HepG2 (cell line): ENCODE measurements at regions of chr20 and their contacts with region 1.

Region 1: DNA sequence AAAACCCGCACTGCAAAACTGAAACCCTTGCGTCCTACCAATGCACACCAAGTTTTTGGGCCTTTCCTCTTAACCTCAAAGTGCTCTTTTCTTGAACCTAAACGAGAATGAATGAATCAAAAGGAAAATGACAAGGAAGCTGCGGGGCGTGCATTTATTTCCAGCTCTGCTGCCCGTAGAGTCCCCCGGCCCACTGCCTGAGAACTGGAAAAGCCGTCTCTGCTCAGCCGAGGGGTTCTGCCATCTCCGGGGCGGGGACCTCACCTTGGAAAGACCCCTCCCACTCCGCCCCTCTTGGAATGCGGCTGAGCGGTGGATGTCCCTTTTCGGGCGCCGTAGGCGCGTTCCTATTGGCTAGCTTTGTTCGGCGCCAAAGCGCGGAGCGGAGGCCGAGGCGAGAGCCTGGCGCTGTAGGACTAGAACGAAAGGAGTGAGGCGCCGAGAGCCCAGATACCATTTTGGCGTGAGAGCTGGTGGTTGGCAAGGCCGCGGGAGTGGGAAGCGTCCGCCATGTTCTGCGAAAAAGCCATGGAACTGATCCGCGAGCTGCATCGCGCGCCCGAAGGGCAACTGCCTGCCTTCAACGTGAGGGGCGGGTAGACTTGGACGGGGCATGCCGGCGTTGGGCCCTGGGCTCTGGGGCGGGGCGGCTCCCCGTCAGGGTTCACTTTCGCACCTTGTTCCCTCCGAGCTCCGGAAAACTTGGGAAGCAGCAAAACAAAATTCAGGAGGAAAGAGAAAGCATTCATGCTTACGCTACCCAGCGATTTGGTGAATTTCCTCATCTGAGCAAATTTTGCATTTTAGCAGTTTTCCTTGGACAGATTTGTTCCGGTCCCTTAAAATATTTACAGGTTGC is at the start of gene GINS1:
- DNase-seq: peak; percentile 95
- ATAC-seq: peak; percentile 93
- H3K4me3 ChIP-seq: peak within 1 kb of the TSS; percentile 78 to 89 (median 88)
- H3K27ac ChIP-seq: peak within 1 kb of the TSS; percentile 86
- H3K4me1 ChIP-seq: peaks cover 24% of the 10 kb centered on the region
- H3K27me3 ChIP-seq: no peaks in the 10 kb centered on the region; a peak in 1 of 5 replicates
- CTCF ChIP-seq: peak; percentile 42; the same call in 1 of the 2 replicates
- EP300 ChIP-seq: peak; percentile 37 to 65
- POLR2A ChIP-seq: peak; percentile 94 to 99
- RAD21 ChIP-seq: peak; percentile 48; the same call in 1 of the 2 replicates
- total RNA-seq, gene GINS1: 59.9 and 74.6 TPM in 2 replicates

Region 2: GRCh38 chr20:23668477-23668951 is 1739.0 kb before region 1 on chr20:
- CTCF ChIA-PET with region 1: no interaction called
- POLR2A ChIA-PET with region 1: no interaction called
- in situ Hi-C with region 1: no loop called
- intact Hi-C with region 1: no loop called
- DNase-seq: peak; percentile 84
- ATAC-seq: peak; percentile 95
- H3K4me3 ChIP-seq: no peak overlapping the region
- H3K27ac ChIP-seq: no peak overlapping the region
- H3K4me1 ChIP-seq: peaks cover 22% of the 10 kb centered on the region
- H3K27me3 ChIP-seq: no peaks in the 10 kb centered on the region
- CTCF ChIP-seq: peak; percentile 99
- EP300 ChIP-seq: no peak
- POLR2A ChIP-seq: no peak
- RAD21 ChIP-seq: peak; percentile 94

Region 3: DNA sequence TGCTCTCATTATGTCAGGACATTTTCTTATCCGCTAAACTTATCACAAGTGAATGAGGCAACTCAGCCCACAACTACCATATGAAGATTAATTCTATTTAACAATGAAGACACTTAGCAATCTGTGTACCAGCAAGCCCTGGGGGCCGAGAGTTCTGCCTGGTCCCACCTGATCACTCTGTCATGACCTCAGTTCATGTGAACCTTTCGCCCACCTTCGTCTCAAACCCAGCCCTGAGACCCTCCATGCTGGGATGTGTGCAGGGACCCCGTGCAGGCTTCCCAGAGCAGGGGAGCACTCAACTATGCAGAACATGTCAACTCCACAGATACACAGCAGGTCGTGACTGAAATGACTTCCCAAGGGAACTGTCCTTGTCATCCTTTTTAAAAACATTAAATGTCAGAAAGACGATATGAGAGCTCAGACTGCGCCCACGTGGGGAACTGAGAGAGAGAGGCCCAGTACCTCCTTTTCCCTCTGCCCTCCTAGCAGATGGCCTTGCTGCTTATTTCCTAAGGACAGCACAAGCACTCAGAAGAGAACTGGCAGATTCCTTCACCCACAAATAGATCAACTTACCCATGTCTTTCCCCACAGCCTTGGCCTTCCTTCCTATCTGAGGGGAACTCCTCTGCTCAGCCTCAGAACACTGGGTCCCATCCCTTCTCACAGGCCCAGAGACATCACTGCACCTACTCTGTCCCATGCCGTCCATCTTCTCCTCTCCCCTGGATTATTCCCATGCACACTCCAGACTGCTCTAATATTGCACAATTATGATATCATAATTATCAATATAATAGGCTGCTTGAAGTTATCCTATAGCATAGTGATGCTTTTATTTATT is 28.4 kb before region 1 on chr20:
- CTCF ChIA-PET with region 1: interaction called, 3 read pairs
- POLR2A ChIA-PET with region 1: interaction called, 10 read pairs
- in situ Hi-C with region 1: no loop called
- intact Hi-C with region 1: no loop called
- DNase-seq: no peak
- ATAC-seq: peak; percentile 24
- H3K4me3 ChIP-seq: peak overlapping the region in 1 of 3 experiments; percentile 15; a peak in 1 of 6 replicates
- H3K27ac ChIP-seq: peak overlapping the region; percentile 10
- H3K4me1 ChIP-seq: peaks cover 66% of the 10 kb centered on the region
- H3K27me3 ChIP-seq: no peaks in the 10 kb centered on the region; a peak in 1 of 5 replicates
- CTCF ChIP-seq: no peak
- EP300 ChIP-seq: no peak
- POLR2A ChIP-seq: no peak
- RAD21 ChIP-seq: no peak